ENCODE measurements at regions of chr7 and their contacts with region 1.

Region 1: GRCh38 chr7:90424720-90425119 is 21.5 kb downstream of the CLDN12 start:
- DNase-seq: no peak
- ATAC-seq: no peak
- H3K4me3 Mint-ChIP-seq: no peak overlapping the region
- H3K27ac Mint-ChIP-seq: no peak overlapping the region
- H3K4me1 Mint-ChIP-seq: no peaks in the 10 kb centered on the region
- H3K27me3 Mint-ChIP-seq: no peaks in the 10 kb centered on the region
- CTCF ChIP-seq: no peak

Region 2: GRCh38 chr7:88546808-88547207 is 1877.9 kb before region 1 on chr7:
- CTCF ChIA-PET with region 1: no interaction called
- POLR2A ChIA-PET with region 1: no interaction called
- intact Hi-C with region 1: loop called (anchors 10 kb)
- DNase-seq: no peak
- ATAC-seq: no peak
- H3K4me3 Mint-ChIP-seq: no peak overlapping the region
- H3K27ac Mint-ChIP-seq: no peak overlapping the region
- H3K4me1 Mint-ChIP-seq: no peaks in the 10 kb centered on the region
- H3K27me3 Mint-ChIP-seq: no peaks in the 10 kb centered on the region
- CTCF ChIP-seq: no peak

Region 3: DNA sequence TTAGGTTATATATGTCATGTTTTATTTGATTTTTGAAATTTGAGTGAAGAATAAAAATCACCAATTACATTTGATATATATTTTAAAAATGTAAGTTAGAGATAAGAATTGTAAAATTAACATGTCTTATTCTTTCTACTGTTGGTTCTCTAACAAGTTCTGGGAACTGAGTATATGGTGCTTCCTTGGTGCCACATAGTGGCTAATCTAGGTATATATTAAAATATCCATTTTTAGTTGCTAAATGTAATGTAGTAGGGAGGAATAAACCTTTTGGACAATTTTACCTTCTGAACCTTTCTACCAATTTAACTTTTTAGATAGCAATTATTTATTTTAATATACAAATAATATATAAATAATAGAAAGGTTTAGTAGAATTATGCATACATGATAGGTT is 162.3 kb before region 1 on chr7:
- CTCF ChIA-PET with region 1: no interaction called
- POLR2A ChIA-PET with region 1: no interaction called
- intact Hi-C with region 1: loop called (anchors 1 kb)
- DNase-seq: no peak
- ATAC-seq: peak; percentile 62
- H3K4me3 Mint-ChIP-seq: no peak overlapping the region
- H3K27ac Mint-ChIP-seq: no peak overlapping the region
- H3K4me1 Mint-ChIP-seq: no peaks in the 10 kb centered on the region
- H3K27me3 Mint-ChIP-seq: no peaks in the 10 kb centered on the region
- CTCF ChIP-seq: no peak

Region 4: DNA sequence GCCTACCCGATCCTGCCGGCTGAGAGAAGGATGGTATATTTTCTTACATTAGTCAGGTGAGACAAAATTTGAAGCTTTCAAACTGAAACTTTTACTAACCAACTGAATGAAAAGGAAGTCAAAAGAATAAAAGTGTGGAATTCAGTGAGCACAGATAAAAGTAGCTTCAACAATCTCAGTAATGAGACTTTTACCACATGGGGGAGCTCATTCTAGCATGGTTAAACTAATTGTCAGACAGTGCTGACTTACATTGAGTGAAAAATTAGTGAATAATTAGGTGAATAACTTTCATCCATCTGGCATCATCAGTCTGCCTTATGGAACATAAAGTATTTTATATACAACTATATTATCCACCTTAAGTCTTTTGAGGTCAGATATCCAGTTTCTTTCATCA is 112.0 kb before region 1 on chr7:
- CTCF ChIA-PET with region 1: interaction called, 25 read pairs
- POLR2A ChIA-PET with region 1: no interaction called
- intact Hi-C with region 1: loop called (anchors 1 kb)
- DNase-seq: no peak
- ATAC-seq: no peak
- H3K4me3 Mint-ChIP-seq: no peak overlapping the region
- H3K27ac Mint-ChIP-seq: no peak overlapping the region
- H3K4me1 Mint-ChIP-seq: no peaks in the 10 kb centered on the region
- H3K27me3 Mint-ChIP-seq: peaks cover 3% of the 10 kb centered on the region
- CTCF ChIP-seq: no peak

Region 5: DNA sequence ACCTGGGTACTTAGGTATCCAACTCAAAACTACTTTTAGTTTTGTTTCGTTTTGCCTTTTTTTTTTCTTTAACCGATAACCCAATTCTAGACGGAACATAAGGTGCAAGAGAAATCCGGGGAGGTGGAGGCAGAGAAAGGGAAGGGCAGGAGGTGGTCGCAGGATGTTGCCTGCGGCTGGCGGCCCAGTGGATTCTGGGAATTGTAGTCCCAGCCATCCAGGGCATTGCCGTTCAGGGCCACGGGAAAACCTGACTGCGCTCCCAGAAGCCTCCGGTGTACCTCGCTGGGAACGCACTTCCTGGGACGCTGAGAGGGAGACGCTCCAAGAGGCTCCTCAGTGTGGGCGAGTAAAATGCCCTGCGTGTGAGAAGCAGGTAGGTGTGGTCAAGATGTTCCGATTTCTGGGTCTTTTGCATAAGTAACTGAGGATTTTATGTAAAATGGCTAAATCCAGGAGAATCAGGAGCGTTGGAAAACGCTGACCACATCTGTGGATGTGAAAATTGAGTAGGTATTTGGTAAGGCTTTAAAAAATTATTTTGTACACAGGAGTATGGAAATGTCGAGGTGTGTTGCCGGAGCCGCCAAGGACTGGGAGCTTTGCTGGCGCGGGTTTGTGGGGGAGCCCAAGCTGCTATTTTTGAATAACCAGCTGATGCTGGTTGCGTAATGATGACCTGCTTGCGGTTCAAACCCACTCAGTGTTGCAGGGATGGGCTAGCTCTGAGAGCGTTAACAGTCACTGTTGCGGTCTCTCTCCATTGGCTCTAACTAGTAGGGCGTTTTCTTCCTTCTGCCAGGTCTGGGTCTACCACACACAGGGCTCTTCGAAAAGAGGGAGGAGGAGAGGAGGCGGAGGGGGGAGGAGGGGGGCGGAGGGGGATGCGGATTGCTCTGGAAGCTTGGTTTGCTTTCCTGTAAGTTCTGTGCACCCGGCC is 21.3 kb before region 1 on chr7 and contains the start of gene CLDN12:
- CTCF ChIA-PET with region 1: no interaction called
- POLR2A ChIA-PET with region 1: no interaction called
- intact Hi-C with region 1: loop called (anchors 1 kb)
- DNase-seq: peak; percentile 57
- ATAC-seq: peak; percentile 94
- H3K4me3 Mint-ChIP-seq: peak within 1 kb of the TSS; percentile 97
- H3K27ac Mint-ChIP-seq: peak within 1 kb of the TSS; percentile 89
- H3K4me1 Mint-ChIP-seq: peaks cover 15% of the 10 kb centered on the region
- H3K27me3 Mint-ChIP-seq: no peaks in the 10 kb centered on the region
- CTCF ChIP-seq: no peak
- total RNA-seq, gene CLDN12: 6.2 and 9.0 TPM in 2 replicates

Region 6: DNA sequence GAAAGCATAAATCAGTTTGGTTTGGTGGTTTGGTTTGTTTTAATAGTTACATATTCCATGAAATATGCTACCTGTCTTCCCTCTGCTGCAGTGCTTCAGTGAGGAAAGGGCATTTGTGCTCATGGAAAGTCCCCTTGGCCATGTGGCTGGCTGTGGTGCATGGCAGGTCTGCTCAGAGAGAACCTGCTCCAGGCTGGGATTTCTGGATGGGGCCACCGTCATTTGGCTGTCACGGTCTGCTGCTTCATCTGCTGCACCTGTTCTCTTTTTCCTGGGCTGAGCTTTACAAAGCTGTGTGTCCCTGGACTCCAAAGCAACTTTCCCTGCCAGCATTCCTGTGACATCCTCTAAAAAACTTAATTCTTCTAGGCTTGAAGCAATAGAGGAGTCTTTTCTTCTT is 180.3 kb after region 1 on chr7:
- CTCF ChIA-PET with region 1: no interaction called
- POLR2A ChIA-PET with region 1: no interaction called
- intact Hi-C with region 1: no loop called
- DNase-seq: no peak
- ATAC-seq: peak; percentile 42
- H3K4me3 Mint-ChIP-seq: no peak overlapping the region
- H3K27ac Mint-ChIP-seq: no peak overlapping the region
- H3K4me1 Mint-ChIP-seq: peaks cover 42% of the 10 kb centered on the region
- H3K27me3 Mint-ChIP-seq: no peaks in the 10 kb centered on the region
- CTCF ChIP-seq: no peak

Measured in activated B cell treated with CpG ODN at 0.5 μM for 24 hours (primary cell).